CD14-positive monocyte (primary cell): ENCODE measurements at regions of chr1 and their contacts with region 1.

Region 1: DNA sequence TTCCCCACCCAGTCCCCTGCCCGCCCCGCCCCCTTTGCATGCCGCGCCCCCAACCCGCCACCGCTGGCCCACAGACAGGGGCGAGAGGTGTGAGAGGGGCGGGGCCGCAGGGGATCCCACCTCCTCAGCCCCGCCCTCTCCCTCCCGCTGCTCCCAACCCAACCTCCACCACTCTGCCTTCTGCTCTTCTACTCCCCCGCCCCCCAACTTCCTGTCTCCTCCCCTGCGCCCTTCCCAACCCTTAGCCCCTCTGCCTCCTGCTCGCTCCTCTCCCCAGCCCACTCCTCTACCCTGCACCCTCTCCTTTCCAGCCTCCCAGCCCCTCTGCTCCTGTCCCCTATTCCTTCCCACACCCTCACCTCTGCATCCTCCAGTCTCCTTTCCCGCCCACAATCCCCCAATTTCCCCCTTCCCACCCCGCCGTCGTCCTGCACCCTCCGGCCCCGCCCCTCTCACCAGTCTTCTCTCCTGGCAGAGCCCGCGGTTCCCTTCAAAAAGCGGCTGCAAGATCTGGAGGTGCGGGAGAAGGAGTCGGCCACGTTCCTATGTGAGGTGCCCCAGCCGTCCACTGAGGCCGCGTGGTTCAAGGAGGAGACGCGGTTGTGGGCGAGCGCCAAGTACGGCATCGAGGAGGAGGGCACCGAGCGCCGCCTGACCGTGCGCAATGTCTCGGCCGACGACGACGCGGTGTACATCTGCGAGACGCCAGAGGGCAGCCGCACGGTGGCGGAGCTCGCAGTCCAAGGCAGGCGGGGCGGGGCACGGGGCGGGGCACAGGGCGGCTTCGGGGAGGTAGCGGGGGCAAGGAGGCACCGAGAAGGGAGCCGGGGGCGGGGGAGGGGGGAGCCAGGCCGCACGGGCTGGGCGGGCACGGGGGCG is 5.4 kb downstream of the OBSCN start:
- DNase-seq: peak; percentile 76 to 81 (median 80)
- H3K4me3 ChIP-seq: peak overlapping the region; percentile 7 to 70 (median 33)
- H3K4me3 Mint-ChIP-seq: peak overlapping the region; percentile 75 to 88
- H3K27ac ChIP-seq: no peak overlapping the region
- H3K27ac Mint-ChIP-seq: peak overlapping the region in 1 of 7 donors; percentile 32
- H3K4me1 ChIP-seq: peaks cover 6 to 16% of the 10 kb centered on the region in 2 donors
- H3K4me1 Mint-ChIP-seq: peaks cover 6% of the 10 kb centered on the region
- H3K27me3 ChIP-seq: peaks cover 0 to 10% of the 10 kb centered on the region in 2 donors
- H3K27me3 Mint-ChIP-seq: peaks cover 9 to 25% (median 24%) of the 10 kb centered on the region in 3 donors
- CTCF ChIP-seq: peak; percentile 16

Region 2: DNA sequence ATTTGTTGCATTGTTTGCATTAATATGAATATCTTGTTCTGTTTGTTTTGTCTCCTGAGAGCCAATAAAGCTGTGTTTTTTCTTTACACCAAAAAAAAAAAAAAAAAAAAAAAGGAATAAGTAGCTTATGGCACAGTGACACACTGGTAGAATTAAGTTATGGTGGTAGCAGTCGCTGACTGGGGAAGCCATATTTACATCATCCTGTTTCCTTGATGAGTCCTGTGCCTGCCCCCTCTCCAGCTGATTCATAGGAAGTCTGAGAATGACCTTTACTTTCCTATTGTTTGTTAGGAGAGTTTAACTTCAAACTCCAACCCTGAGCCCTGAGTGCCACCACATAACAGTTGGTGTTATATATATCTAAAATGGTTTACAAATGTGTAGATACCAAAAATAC is 56.8 kb after region 1 on chr1:
- intact Hi-C with region 1: loop called in 1 of 2 experiments (anchors 2 kb)
- DNase-seq: no peak
- H3K4me3 ChIP-seq: no peak overlapping the region
- H3K4me3 Mint-ChIP-seq: no peak overlapping the region
- H3K27ac ChIP-seq: no peak overlapping the region
- H3K27ac Mint-ChIP-seq: no peak overlapping the region
- H3K4me1 ChIP-seq: peaks cover 2 to 5% of the 10 kb centered on the region in 2 donors
- H3K4me1 Mint-ChIP-seq: peaks cover 7% of the 10 kb centered on the region
- H3K27me3 ChIP-seq: no peaks in the 10 kb centered on the region
- H3K27me3 Mint-ChIP-seq: peaks cover 4 to 11% (median 8%) of the 10 kb centered on the region in 3 donors
- CTCF ChIP-seq: no peak

Region 3: DNA sequence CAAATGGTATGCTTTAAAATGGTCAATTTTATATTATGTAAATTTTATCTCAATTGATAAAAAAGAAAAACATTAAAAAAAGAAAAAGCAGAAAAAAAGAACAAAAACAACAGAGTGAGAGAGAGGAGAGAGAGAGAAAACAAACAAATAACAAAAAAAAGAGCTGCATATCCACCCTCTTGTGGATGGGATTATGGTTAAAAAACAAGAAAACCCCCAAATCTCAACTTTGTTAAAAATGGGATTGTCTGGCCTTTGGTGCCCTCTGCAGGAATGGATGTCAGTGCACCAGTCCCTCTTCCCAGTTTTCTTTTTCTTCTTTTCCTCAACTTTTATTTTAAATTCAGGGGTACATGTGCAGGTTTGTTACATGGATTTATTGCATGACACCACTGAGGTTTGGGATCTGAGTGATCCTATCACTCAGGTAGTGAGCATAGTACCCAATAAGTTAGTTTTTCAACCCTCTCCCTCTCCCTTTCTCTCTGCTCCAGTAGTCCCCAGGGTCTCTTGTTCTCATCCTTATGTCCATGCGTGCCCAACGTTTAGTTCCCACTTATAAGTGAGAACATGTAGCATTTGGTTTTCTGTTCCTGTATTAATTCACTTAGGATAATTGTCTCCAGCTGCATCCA is 302.1 kb after region 1 on chr1:
- intact Hi-C with region 1: loop called in 1 of 2 experiments (anchors 5 kb)
- DNase-seq: peak; percentile 25 to 47 (median 36)
- H3K4me3 ChIP-seq: no peak overlapping the region
- H3K4me3 Mint-ChIP-seq: peak overlapping the region in 1 of 2 donors; percentile 74
- H3K27ac ChIP-seq: no peak overlapping the region
- H3K27ac Mint-ChIP-seq: no peak overlapping the region
- H3K4me1 ChIP-seq: peaks cover 4 to 17% of the 10 kb centered on the region in 2 donors
- H3K4me1 Mint-ChIP-seq: peaks cover 14% of the 10 kb centered on the region
- H3K27me3 ChIP-seq: peaks cover 10 to 21% of the 10 kb centered on the region in 2 donors
- H3K27me3 Mint-ChIP-seq: peaks cover 35 to 48% (median 47%) of the 10 kb centered on the region in 3 donors
- CTCF ChIP-seq: peak; percentile 89